PC-9 (cell line): ENCODE measurements at regions of chr16 and their contacts with region 1.

Region 1: GRCh38 chr16:4766874-4767628 is at the start of gene ZNF500:
- DNase-seq: peak; percentile 89 to 99
- H3K4me3 ChIP-seq: peak within 1 kb of the TSS; percentile 70
- H3K27ac ChIP-seq: peak within 1 kb of the TSS; percentile 68
- H3K4me1 ChIP-seq: peaks cover 10% of the 10 kb centered on the region
- H3K27me3 ChIP-seq: no peaks in the 10 kb centered on the region
- CTCF ChIP-seq: no peak
- total RNA-seq, gene ZNF500: 28.8 and 29.2 TPM in 2 replicates

Region 2: DNA sequence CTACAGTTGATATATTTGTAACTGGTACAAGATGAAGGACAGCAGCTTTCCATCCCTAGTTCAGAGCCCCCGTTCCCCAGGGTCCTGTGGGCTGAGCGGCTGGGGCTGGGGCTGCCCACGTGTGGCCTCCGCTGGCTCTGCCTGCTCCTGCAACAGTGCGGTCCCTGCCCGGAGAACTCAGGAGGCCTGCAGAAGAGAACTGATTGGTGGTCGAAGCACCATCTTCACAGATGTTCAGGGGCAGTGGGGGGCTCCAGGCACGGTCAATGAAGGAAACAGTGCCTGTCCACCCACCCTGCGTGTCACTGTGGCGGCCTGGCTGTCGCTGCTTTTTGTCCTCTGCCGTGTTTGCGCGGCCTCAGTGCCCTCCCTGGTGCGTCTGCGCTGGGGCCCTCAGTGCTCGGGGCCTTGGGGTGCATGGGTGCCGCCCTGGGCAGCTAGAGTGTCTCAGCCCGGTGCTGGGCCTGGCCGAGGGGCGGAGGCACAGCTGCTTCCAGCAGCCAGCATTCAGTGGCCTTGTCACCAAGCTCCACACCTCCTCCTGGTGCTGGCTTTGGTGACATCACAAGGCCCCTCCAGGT is 77.9 kb before region 1 on chr16:
- CTCF ChIA-PET with region 1: no interaction called
- POLR2A ChIA-PET with region 1: no interaction called
- intact Hi-C with region 1: no loop called
- DNase-seq: no peak
- H3K4me3 ChIP-seq: no peak overlapping the region
- H3K27ac ChIP-seq: no peak overlapping the region
- H3K4me1 ChIP-seq: peaks cover 20% of the 10 kb centered on the region
- H3K27me3 ChIP-seq: no peaks in the 10 kb centered on the region
- CTCF ChIP-seq: no peak

Region 3: DNA sequence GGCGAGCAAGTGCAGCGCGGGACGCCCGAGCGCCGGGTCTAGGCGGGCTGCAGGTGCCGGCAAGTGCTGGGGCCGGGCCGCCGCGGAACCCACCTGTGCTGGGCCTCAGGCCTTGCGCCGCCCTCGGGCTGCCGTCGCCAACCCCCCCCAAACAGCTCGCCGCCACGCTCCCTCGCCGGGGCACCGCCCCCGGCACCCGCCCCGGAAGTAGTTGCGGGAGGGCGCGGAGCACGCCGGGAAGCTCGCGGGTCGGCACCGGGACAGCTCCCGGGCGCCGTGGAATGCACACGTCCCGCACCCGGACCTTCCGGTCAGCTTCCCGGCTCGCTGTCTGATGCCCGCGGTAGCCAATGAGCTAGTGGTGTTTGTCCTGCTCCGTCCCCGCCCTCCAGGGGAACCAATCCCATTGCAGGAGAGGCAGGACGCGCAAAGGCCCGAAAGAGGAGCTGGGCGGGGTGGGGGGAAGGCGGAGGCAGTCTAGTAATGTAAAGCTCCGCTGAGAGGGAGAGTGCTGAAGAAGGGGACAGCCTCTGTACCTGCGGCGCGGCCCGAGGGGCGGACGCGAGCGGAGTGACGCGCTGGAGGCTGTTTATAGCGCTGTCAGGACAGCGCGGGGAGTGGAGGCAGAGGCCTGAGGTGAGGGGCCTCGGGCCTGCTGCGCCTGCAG is 32.9 kb before region 1 on chr16 and contains the starts of genes ANKS3 and DNAAF8:
- CTCF ChIA-PET with region 1: no interaction called
- POLR2A ChIA-PET with region 1: interaction called, 8 read pairs
- intact Hi-C with region 1: loop called (anchors 1 kb)
- DNase-seq: peak; percentile 93 to 97
- H3K4me3 ChIP-seq: peak within 1 kb of the TSS; percentile 83
- H3K27ac ChIP-seq: peak within 1 kb of the TSS; percentile 52
- H3K4me1 ChIP-seq: peaks cover 12% of the 10 kb centered on the region
- H3K27me3 ChIP-seq: no peaks in the 10 kb centered on the region
- CTCF ChIP-seq: no peak
- total RNA-seq, gene ANKS3: 32.8 and 35.0 TPM in 2 replicates
- total RNA-seq, gene DNAAF8: 1.8 and 2.4 TPM in 2 replicates

Region 4: GRCh38 chr16:4795181-4795828 is 28.3 kb after region 1 on chr16 and contains the start of gene SMIM22:
- CTCF ChIA-PET with region 1: no interaction called
- POLR2A ChIA-PET with region 1: interaction called, 11 read pairs
- intact Hi-C with region 1: loop called (anchors 1 kb)
- DNase-seq: peak; percentile 67 to 85
- H3K4me3 ChIP-seq: peak within 1 kb of the TSS; percentile 91
- H3K27ac ChIP-seq: peak within 1 kb of the TSS; percentile 56
- H3K4me1 ChIP-seq: peaks cover 24% of the 10 kb centered on the region
- H3K27me3 ChIP-seq: no peaks in the 10 kb centered on the region
- CTCF ChIP-seq: no peak
- total RNA-seq, gene SMIM22: 134 and 182 TPM in 2 replicates

Region 5: DNA sequence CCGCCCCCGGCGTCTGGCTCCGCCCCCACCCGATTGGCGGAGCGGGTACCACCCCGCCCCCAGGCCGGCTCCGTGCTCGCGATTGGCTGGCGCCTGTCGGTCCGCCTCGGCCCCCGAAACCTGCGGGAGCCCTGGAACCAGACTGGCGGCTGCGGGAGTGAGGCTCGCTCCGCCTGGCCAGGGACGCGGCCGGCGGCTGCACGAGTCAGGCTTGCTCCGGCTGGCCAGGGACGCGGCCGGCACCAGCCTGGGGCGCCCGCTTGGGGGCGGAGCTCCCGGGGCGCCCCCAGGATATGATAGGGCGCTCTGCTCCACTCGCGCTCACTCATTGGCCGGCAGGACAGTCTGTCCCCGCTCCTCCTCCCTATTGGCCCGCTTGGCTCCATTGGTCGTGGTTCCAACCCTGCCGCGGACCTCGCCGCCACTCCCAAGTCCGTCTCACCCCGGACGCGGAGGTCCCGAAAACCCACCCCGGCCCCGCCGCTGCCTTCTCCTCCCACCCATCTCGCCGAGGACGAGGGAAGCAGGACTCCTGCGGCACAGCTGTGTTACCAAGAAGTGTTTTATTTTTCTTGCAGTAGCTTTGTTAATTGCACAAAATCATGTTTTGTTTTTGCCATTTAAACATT is 35.7 kb after region 1 on chr16:
- CTCF ChIA-PET with region 1: no interaction called
- POLR2A ChIA-PET with region 1: interaction called, 5 read pairs
- intact Hi-C with region 1: loop called (anchors 1 kb)
- DNase-seq: peak; percentile 82 to 96
- H3K4me3 ChIP-seq: peak overlapping the region; percentile 81
- H3K27ac ChIP-seq: peak overlapping the region; percentile 55
- H3K4me1 ChIP-seq: peaks cover 14% of the 10 kb centered on the region
- H3K27me3 ChIP-seq: no peaks in the 10 kb centered on the region
- CTCF ChIP-seq: 0 out of 2 replicates have a peak, but pooled peaks have one; percentile 25